H1 (cell line): ENCODE measurements at regions of chr18 and their contacts with region 1.

Region 1: DNA sequence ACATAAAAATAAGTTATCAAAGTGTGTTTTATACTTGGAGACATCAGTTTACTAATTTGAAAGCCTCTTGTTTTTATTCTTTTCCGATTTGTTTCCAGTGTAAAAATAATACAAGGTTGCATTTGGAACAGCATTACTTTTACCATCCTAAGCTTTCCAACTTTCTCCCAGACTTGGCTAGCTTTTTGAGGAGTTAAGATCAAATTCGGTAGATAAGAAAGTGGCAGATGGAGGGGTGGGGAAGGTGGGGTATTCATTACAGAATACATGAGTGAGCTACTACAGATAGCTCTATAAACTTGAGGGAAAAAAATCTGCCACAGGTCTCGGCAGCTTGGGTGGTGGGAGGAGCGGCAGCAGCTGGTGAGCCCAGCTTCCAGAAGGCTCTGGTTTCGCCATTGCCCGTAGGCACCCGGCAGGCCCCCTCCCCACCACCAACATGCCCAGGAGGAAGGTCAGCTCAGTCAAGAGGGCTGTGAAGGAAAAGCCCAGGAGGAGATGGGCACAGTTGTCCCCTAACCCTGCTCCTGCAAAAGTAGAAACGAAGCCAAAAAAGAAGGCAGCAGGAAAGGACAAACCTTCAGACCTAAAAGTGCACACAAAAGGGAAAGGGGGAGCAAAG is 18.6 kb upstream of the RMC1 start:
- DNase-seq: no peak
- H3K4me3 ChIP-seq: no peak overlapping the region
- H3K27ac ChIP-seq: no peak overlapping the region
- H3K4me1 ChIP-seq: no peaks in the 10 kb centered on the region
- H3K27me3 ChIP-seq: no peaks in the 10 kb centered on the region
- CTCF ChIP-seq: no peak
- EP300 ChIP-seq: no peak
- POLR2A ChIP-seq: no peak
- RAD21 ChIP-seq: no peak

Region 2: DNA sequence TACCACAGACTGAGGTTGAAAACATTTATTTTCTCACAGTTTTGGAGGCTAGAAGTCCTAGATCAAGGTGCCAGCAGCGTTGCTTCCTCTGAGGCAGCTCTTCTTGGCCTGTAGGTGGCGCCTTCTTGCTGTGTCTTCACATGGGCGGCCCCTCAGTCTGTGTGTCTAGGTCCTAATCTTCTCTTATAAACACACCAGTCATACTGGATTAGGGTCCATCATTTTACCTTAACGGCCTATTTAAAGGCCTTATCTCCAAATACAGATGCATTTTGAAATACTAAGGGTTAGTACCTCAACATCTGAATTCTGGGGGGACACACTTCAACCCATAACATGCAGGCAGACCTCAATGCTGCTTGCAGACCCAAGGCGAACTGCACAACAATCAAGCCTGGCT is 14.2 kb after region 1 on chr18:
- CTCF ChIA-PET with region 1: interaction called, 14 read pairs
- POLR2A ChIA-PET with region 1: interaction called, 3 read pairs
- DNase-seq: peak in 1 of 2 experiments; percentile 66
- H3K4me3 ChIP-seq: no peak overlapping the region
- H3K27ac ChIP-seq: no peak overlapping the region
- H3K4me1 ChIP-seq: peaks cover 0 to 4% (median 0%) of the 10 kb centered on the region in 4 experiments; a peak in 1 of 7 replicates
- H3K27me3 ChIP-seq: peaks cover 0 to 4% (median 1%) of the 10 kb centered on the region in 4 experiments; a peak in 4 of 7 replicates
- CTCF ChIP-seq: peak; percentile 75 to 95 (median 89)
- EP300 ChIP-seq: no peak
- POLR2A ChIP-seq: no peak
- RAD21 ChIP-seq: peak; percentile 66 to 75